Activated CD4-positive, alpha-beta T cell treated with anti-CD3 and anti-CD28 coated beads for 36 hours (primary cell): ENCODE measurements at regions of chr1 and their contacts with region 1.

Region 1: GRCh38 chr1:64268653-64269557 is 65.5 kb downstream of the UBE2U start:
- DNase-seq: peak; percentile 83
- ATAC-seq: peak; percentile 70
- H3K4me3 Mint-ChIP-seq: no peak overlapping the region
- H3K27ac Mint-ChIP-seq: no peak overlapping the region
- H3K4me1 Mint-ChIP-seq: no peaks in the 10 kb centered on the region
- H3K27me3 Mint-ChIP-seq: peaks cover 7% of the 10 kb centered on the region

Region 2: GRCh38 chr1:64019818-64020217 is 249.1 kb before region 1 on chr1:
- CTCF ChIA-PET with region 1: no interaction called
- POLR2A ChIA-PET with region 1: interaction called, 13 read pairs
- intact Hi-C with region 1: no loop called
- DNase-seq: peak; percentile 7
- ATAC-seq: peak; percentile 58
- H3K4me3 Mint-ChIP-seq: no peak overlapping the region
- H3K27ac Mint-ChIP-seq: no peak overlapping the region
- H3K4me1 Mint-ChIP-seq: peaks cover 14% of the 10 kb centered on the region
- H3K27me3 Mint-ChIP-seq: no peaks in the 10 kb centered on the region

Region 3: GRCh38 chr1:64337475-64337874 is 68.6 kb after region 1 on chr1:
- CTCF ChIA-PET with region 1: no interaction called
- POLR2A ChIA-PET with region 1: no interaction called
- intact Hi-C with region 1: no loop called
- DNase-seq: no peak
- ATAC-seq: no peak
- H3K4me3 Mint-ChIP-seq: no peak overlapping the region
- H3K27ac Mint-ChIP-seq: no peak overlapping the region
- H3K4me1 Mint-ChIP-seq: no peaks in the 10 kb centered on the region
- H3K27me3 Mint-ChIP-seq: peaks cover 5% of the 10 kb centered on the region

Region 4: DNA sequence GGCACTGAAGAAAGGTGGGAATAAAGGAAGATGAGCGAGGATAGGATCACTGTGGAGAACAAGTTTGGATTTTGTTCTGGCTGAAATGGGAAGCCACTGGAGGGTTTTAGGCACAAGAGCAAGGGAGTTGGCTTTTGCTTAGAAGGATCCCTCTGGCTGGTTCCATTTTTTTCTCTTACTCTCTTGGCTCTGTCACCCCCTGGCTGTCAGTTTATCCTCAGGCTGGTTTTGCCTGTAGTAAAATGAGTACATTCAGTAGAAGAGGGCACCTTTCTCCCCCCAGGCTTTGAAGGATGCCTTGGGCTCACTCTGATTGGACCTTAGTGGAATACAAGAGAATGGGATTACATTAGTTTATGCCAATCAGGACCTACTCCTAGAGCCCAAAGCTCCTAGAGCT is 218.2 kb after region 1 on chr1:
- CTCF ChIA-PET with region 1: no interaction called
- POLR2A ChIA-PET with region 1: no interaction called
- intact Hi-C with region 1: loop called in 1 of 2 experiments (anchors 2 kb)
- DNase-seq: no peak
- ATAC-seq: no peak
- H3K4me3 Mint-ChIP-seq: no peak overlapping the region
- H3K27ac Mint-ChIP-seq: no peak overlapping the region
- H3K4me1 Mint-ChIP-seq: peaks cover 15% of the 10 kb centered on the region
- H3K27me3 Mint-ChIP-seq: peaks cover 6% of the 10 kb centered on the region

Region 5: DNA sequence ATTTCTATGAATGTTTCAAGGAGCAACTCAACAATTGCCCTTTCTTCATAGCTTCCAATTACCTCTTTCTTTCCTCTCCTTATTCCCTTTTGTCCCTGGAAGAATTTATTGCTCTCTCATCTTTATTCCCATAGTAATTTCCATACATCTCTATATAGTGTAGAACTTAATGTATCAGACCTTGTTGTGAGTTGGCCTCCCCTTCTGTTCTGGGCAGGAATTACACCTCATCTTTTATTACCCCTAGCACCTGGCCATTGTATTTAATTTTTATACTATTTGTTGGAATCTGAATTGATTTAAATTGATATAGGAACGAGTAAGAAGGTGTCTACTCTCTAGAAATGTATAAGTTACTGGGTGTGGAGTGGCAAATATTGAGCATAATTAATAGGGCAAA is 315.6 kb after region 1 on chr1:
- CTCF ChIA-PET with region 1: no interaction called
- POLR2A ChIA-PET with region 1: no interaction called
- intact Hi-C with region 1: loop called in 1 of 2 experiments (anchors 5 kb)
- DNase-seq: no peak
- ATAC-seq: no peak
- H3K4me3 Mint-ChIP-seq: no peak overlapping the region
- H3K27ac Mint-ChIP-seq: no peak overlapping the region
- H3K4me1 Mint-ChIP-seq: peaks cover 7% of the 10 kb centered on the region
- H3K27me3 Mint-ChIP-seq: peaks cover 2% of the 10 kb centered on the region

Region 6: DNA sequence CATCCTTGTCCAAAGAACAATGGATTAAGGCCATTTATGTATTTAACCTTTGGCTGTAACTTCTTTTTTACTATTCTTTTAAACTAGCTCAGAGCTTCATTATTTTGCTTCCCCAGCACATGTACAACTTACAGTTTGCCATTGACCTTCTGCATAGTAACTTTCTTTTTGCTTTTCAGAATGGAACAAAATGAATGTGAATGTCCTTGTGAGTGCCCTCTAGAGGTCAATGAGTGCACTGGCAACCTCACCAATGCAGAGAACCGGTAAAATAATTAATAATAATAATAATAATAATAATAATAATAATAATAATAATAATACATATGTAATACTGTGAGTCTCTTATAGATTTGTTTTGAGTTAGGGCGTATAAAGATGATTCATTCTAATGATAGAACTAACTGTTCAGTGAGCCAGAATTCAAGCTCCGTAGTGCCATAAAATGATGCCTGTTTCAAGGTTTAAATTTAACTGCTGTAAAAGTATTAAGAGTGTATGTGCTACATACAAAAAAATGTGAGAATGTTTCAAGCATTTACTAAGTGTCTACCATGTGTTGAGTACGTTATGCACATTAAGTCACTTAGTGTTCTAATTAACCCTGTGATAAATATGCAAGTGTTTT is 406.9 kb after region 1 on chr1:
- CTCF ChIA-PET with region 1: interaction called, 29 read pairs
- POLR2A ChIA-PET with region 1: no interaction called
- intact Hi-C with region 1: loop called in 1 of 2 experiments (anchors 1 kb)
- DNase-seq: no peak
- ATAC-seq: no peak
- H3K4me3 Mint-ChIP-seq: no peak overlapping the region
- H3K27ac Mint-ChIP-seq: no peak overlapping the region
- H3K4me1 Mint-ChIP-seq: no peaks in the 10 kb centered on the region
- H3K27me3 Mint-ChIP-seq: no peaks in the 10 kb centered on the region